ENCODE measurements at regions of chr20 and their contacts with region 1.

Region 1: DNA sequence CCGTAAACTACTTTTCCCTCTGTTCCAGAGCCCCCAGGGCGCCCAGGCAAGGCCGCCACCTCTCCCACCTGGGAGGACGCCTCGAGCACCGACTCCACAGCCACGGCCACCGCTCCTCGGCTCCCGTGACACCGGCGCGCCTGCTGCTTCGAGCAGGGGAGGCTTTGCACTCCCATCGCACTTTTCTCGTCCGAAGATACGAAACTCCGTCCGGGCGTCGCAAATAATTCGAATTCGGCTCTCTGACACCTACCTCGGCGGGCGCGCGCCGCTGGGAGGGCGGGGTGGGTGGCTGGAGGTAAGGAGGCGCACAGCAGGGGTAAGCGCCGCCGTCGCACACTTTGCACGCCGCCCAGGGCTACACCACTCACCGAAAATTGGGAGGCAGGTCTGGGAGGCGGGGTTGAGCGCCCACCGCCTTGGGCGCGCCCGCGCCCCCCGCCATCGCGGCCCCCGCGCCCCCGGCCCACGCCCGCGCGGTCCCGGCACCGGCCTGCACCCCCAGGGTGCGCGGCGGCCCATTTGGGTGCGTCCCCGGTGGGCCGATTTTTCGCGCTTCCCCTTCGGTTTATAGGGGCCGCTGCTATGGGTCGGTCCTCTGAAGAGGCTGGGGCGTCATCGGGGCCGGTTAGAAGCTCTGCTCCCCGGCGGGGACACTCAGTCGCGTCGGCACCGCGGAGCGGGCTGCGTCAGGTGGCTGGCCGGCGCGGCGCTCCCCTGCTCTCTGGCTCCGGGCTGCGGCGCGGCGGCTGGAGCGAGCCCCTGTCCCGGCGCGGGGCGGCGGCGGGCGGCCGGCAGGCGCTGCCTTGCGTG is 36.2 kb downstream of the GNAS start:
- DNase-seq: peak; percentile 87 to 90 (median 89)
- H3K4me3 ChIP-seq: peak overlapping the region; percentile 12 to 64
- H3K4me3 Mint-ChIP-seq: peak overlapping the region; percentile 79 to 90 (median 85)
- H3K27ac ChIP-seq: peak overlapping the region; percentile 78
- H3K27ac Mint-ChIP-seq: peak overlapping the region; percentile 87 to 95 (median 90)
- H3K4me1 ChIP-seq: peaks cover 19% of the 10 kb centered on the region
- H3K4me1 Mint-ChIP-seq: peaks cover 9 to 25% (median 18%) of the 10 kb centered on the region in 4 donors
- H3K27me3 ChIP-seq: no peaks in the 10 kb centered on the region
- H3K27me3 Mint-ChIP-seq: no peaks in the 10 kb centered on the region

Region 2: DNA sequence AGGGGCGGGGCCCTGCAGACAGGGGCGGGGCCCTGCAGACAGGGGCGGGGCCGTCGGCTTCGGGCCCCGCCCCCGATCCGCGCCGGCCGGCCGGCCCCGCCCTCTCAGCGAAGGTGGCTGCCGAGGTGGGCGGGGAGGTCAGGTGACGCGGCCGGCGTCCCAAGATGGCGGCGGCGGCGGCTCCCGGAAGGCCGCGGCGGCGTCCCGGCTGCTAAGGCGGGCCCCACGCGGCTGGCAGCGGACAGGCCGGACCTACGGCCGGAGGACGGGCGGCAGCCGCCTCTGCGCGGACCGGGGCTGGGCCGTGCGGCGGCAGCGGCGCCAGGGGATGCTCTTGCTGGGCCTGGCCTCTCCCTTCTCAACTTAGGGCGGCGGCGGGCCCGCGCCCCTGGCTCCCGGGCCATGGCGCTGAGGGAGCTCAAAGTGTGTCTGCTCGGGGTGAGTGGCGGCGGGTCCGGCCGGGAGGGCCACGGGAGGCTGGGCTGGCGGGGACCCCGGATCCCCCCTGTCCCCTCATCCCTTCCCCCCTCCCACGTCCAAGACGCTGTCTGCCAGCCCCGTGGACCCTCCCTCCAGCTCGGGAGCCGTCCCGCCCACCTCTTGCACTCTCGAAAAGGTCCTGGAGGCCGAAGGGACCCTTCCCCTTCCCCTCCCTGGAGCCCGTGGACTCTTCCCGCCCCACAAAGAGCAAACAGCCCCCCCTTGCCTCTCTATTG is 579.0 kb before region 1 on chr20 and contains the start of gene RAB22A:
- CTCF ChIA-PET with region 1: no interaction called
- POLR2A ChIA-PET with region 1: interaction called, 3 read pairs
- intact Hi-C with region 1: loop called (anchors 2 kb)
- DNase-seq: peak; percentile 77 to 88 (median 83)
- H3K4me3 ChIP-seq: peak within 1 kb of the TSS; percentile 62 to 72
- H3K4me3 Mint-ChIP-seq: peak within 1 kb of the TSS; percentile 88 to 98 (median 94)
- H3K27ac ChIP-seq: peak within 1 kb of the TSS; percentile 87
- H3K27ac Mint-ChIP-seq: peak within 1 kb of the TSS; percentile 95 to 99 (median 99)
- H3K4me1 ChIP-seq: peaks cover 68% of the 10 kb centered on the region
- H3K4me1 Mint-ChIP-seq: peaks cover 40 to 71% (median 56%) of the 10 kb centered on the region in 4 donors
- H3K27me3 ChIP-seq: no peaks in the 10 kb centered on the region
- H3K27me3 Mint-ChIP-seq: no peaks in the 10 kb centered on the region
- total RNA-seq, gene RAB22A: 23.6 TPM

Region 3: GRCh38 chr20:58388882-58389323 is 499.8 kb before region 1 on chr20 and contains the start of gene VAPB:
- CTCF ChIA-PET with region 1: no interaction called
- POLR2A ChIA-PET with region 1: interaction called, 5 read pairs
- intact Hi-C with region 1: loop called (anchors 1 kb)
- DNase-seq: peak; percentile 94 to 98 (median 97)
- H3K4me3 ChIP-seq: peak within 1 kb of the TSS; percentile 47 to 58
- H3K4me3 Mint-ChIP-seq: peak within 1 kb of the TSS; percentile 94 to 97 (median 94)
- H3K27ac ChIP-seq: peak within 1 kb of the TSS; percentile 98
- H3K27ac Mint-ChIP-seq: peak within 1 kb of the TSS; percentile 78 to 99 (median 99)
- H3K4me1 ChIP-seq: peaks cover 46% of the 10 kb centered on the region
- H3K4me1 Mint-ChIP-seq: peaks cover 29 to 43% (median 38%) of the 10 kb centered on the region in 4 donors
- H3K27me3 ChIP-seq: no peaks in the 10 kb centered on the region
- H3K27me3 Mint-ChIP-seq: peaks cover 0 to 3% of the 10 kb centered on the region in 2 donors
- total RNA-seq, gene VAPB: 37.6 to 40.1 TPM

Region 4: GRCh38 chr20:58907399-58908137 is 18.8 kb after region 1 on chr20:
- CTCF ChIA-PET with region 1: no interaction called
- POLR2A ChIA-PET with region 1: interaction called, 9 read pairs
- intact Hi-C with region 1: loop called (anchors 2 kb)
- DNase-seq: peak; percentile 68 to 83 (median 71)
- H3K4me3 ChIP-seq: no peak overlapping the region
- H3K4me3 Mint-ChIP-seq: peak overlapping the region; percentile 75 to 91 (median 80)
- H3K27ac ChIP-seq: peak overlapping the region; percentile 23
- H3K27ac Mint-ChIP-seq: peak overlapping the region; percentile 78 to 97 (median 92)
- H3K4me1 ChIP-seq: peaks cover 30% of the 10 kb centered on the region
- H3K4me1 Mint-ChIP-seq: peaks cover 32 to 71% (median 48%) of the 10 kb centered on the region in 4 donors
- H3K27me3 ChIP-seq: no peaks in the 10 kb centered on the region
- H3K27me3 Mint-ChIP-seq: peaks cover 0 to 2% of the 10 kb centered on the region in 2 donors

Region 5: DNA sequence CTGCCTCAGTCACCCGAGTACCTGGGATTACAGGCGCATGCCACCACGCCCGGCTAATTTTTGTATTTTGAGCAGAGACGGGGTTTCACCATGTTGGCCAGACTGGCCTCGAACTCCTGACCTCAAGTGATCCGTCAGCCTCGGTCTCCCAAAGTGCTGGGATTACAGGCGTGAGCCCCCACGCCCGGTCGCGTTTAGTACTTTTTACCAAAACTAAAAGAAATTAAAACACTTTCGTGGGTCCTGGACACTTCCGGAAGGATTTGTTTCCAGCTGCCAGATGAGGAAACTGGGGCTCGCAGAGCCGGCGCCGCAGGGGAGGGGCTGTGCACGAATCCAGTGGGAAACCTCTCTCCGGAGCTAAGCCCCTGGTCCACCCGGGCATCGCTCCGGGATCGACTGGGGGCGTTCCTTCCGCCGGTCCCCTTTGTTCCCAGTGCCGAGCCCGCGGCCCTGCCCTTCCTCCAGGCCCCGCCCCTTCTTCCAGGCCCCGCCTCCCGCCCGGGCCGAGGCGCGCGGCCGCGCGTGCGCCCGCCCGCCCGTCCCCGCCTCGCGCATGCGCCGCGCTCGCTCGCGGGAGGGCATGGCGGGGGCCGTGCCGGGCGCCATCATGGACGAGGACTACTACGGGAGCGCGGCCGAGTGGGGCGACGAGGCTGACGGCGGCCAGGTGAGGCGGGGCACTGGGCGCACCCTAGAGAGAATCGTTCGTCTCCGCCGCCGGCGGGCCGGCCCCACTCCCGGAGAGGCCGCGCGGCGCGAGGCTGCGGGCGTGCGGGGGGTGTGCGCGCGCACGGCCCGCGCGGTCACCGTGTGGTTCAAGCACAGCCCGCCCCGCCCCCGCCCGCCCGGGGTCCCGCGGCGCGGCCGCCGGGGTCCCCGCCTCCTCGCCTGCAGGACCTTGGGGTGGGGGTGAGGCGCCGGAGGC is 92.2 kb after region 1 on chr20 and contains the start of gene NELFCD:
- CTCF ChIA-PET with region 1: interaction called, 5 read pairs
- POLR2A ChIA-PET with region 1: interaction called, 20 read pairs
- intact Hi-C with region 1: loop called (anchors 1 kb)
- DNase-seq: peak; percentile 84 to 90 (median 88)
- H3K4me3 ChIP-seq: peak within 1 kb of the TSS; percentile 82 to 95
- H3K4me3 Mint-ChIP-seq: peak within 1 kb of the TSS; percentile 91 to 97 (median 94)
- H3K27ac ChIP-seq: peak within 1 kb of the TSS; percentile 66
- H3K27ac Mint-ChIP-seq: peak within 1 kb of the TSS; percentile 72 to 97 (median 93)
- H3K4me1 ChIP-seq: peaks cover 41% of the 10 kb centered on the region
- H3K4me1 Mint-ChIP-seq: peaks cover 29 to 39% (median 33%) of the 10 kb centered on the region in 4 donors
- H3K27me3 ChIP-seq: no peaks in the 10 kb centered on the region
- H3K27me3 Mint-ChIP-seq: no peaks in the 10 kb centered on the region
- total RNA-seq, gene NELFCD: 77.6 to 93.3 TPM

Region 6: GRCh38 chr20:59042796-59043660 is 154.3 kb after region 1 on chr20:
- CTCF ChIA-PET with region 1: no interaction called
- POLR2A ChIA-PET with region 1: interaction called, 19 read pairs
- intact Hi-C with region 1: no loop called
- DNase-seq: peak; percentile 92 to 96 (median 95)
- H3K4me3 ChIP-seq: peak overlapping the region; percentile 65 to 91
- H3K4me3 Mint-ChIP-seq: peak overlapping the region; percentile 84 to 95 (median 92)
- H3K27ac ChIP-seq: peak overlapping the region; percentile 92
- H3K27ac Mint-ChIP-seq: peak overlapping the region; percentile 91 to 97 (median 97)
- H3K4me1 ChIP-seq: peaks cover 50% of the 10 kb centered on the region
- H3K4me1 Mint-ChIP-seq: peaks cover 31 to 59% (median 48%) of the 10 kb centered on the region in 4 donors
- H3K27me3 ChIP-seq: no peaks in the 10 kb centered on the region
- H3K27me3 Mint-ChIP-seq: no peaks in the 10 kb centered on the region

Region 7: GRCh38 chr20:59165891-59166709 is 277.4 kb after region 1 on chr20:
- CTCF ChIA-PET with region 1: no interaction called
- POLR2A ChIA-PET with region 1: interaction called, 3 read pairs
- intact Hi-C with region 1: loop called (anchors 5 kb)
- DNase-seq: peak; percentile 70 to 83 (median 80)
- H3K4me3 ChIP-seq: peak overlapping the region; percentile 61 to 64
- H3K4me3 Mint-ChIP-seq: peak overlapping the region; percentile 84 to 96 (median 88)
- H3K27ac ChIP-seq: peak overlapping the region; percentile 97
- H3K27ac Mint-ChIP-seq: peak overlapping the region; percentile 97 to 99 (median 99)
- H3K4me1 ChIP-seq: peaks cover 88% of the 10 kb centered on the region
- H3K4me1 Mint-ChIP-seq: peaks cover 72 to 98% (median 82%) of the 10 kb centered on the region in 4 donors
- H3K27me3 ChIP-seq: no peaks in the 10 kb centered on the region
- H3K27me3 Mint-ChIP-seq: no peaks in the 10 kb centered on the region